ENCODE measurements at regions of chr6 and their contacts with region 1.

Region 1: DNA sequence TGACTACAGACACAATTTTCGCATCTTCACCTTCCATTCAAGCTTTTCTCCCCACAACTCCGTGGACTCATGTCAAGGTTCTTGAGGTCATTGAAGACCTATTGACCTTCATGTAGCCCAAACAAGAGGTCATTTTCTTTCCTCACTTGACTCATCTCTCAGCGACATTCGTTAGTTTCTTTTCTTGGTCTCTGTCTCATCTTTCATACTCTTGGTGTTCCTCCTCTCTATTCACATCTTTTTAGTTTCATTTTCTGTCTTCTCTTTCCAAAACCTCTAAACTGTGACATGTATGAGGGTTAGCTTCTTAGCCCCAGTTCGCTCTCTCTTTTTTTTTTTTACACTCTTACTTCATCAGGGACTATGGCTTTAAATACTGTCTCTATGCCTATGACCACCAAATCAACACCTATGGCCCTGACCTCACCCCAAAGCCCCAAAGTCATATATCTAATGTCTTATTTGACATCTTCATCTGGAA is 128.6 kb upstream of the BACH2 start:
- DNase-seq: peak; percentile 46 to 63
- ATAC-seq: peak; percentile 92 to 96 (median 93)
- H3K4me3 ChIP-seq: no peak overlapping the region
- H3K4me3 Mint-ChIP-seq: peak overlapping the region; percentile 65
- H3K27ac ChIP-seq: peak overlapping the region; percentile 82
- H3K27ac Mint-ChIP-seq: peak overlapping the region; percentile 84 to 88
- H3K4me1 ChIP-seq: no peaks in the 10 kb centered on the region
- H3K4me1 Mint-ChIP-seq: peaks cover 11% of the 10 kb centered on the region in 2 donors
- H3K27me3 ChIP-seq: no peaks in the 10 kb centered on the region
- H3K27me3 Mint-ChIP-seq: no peaks in the 10 kb centered on the region
- CTCF ChIP-seq: no peak

Region 2: DNA sequence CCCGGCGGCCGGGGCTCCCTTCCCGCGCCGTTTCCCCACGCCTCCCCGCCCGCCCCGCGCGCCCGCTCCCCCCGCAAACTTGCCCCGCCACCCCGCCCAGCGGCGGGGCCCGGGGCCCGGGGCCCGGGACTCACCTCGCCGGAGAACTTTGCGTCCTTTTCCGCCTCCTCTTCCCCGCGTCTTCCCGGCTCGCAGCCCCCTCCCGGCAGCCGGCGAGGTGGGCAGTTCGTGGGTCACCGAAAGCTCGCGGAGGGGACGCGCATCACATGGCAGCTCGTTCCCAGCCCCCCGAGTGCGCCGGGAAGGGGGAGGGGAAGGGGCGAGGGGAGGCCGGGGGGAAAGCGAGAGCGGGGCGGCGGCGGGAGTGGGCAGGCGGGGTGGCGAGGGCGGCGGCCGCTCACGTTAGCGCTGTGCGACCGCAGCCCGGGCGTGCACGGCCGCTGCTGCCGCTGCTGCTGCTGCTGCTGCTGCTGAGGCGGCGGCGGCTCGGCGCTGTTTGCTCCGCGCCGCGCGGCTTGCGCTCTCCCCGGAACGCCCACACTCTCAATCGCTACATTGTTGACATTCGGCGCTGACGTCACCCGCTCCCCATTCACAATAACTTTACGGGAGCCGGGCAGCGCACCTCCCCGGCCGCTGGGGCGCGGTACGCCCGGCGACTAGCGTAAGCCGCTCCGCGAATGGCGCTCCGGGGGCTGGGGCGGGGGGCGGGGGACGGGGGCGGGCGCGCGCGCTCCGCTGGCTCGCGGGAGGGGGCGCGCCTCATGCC is 128.7 kb before region 1 on chr6 and contains the start of gene BACH2:
- intact Hi-C with region 1: loop called (anchors 2 kb)
- DNase-seq: peak; percentile 84 to 97
- ATAC-seq: peak; percentile 68 to 81 (median 72)
- H3K4me3 ChIP-seq: peak within 1 kb of the TSS; percentile 67
- H3K4me3 Mint-ChIP-seq: peak within 1 kb of the TSS; percentile 94
- H3K27ac ChIP-seq: peak within 1 kb of the TSS; percentile 79
- H3K27ac Mint-ChIP-seq: peak within 1 kb of the TSS; percentile 83 to 86
- H3K4me1 ChIP-seq: peaks cover 19% of the 10 kb centered on the region
- H3K4me1 Mint-ChIP-seq: peaks cover 11 to 21% of the 10 kb centered on the region in 2 donors
- H3K27me3 ChIP-seq: peaks cover 3% of the 10 kb centered on the region
- H3K27me3 Mint-ChIP-seq: peaks cover 13 to 30% of the 10 kb centered on the region in 2 donors
- CTCF ChIP-seq: no peak
- total RNA-seq, gene BACH2: 32.1 to 37.8 (median 32.7) TPM

Region 3: GRCh38 chr6:90383196-90383822 is 41.9 kb before region 1 on chr6:
- intact Hi-C with region 1: loop called (anchors 1 kb)
- DNase-seq: peak in 1 of 2 donors; percentile 57
- ATAC-seq: peak; percentile 76 to 98 (median 96)
- H3K4me3 ChIP-seq: no peak overlapping the region
- H3K4me3 Mint-ChIP-seq: peak overlapping the region; percentile 69
- H3K27ac ChIP-seq: peak overlapping the region; percentile 52
- H3K27ac Mint-ChIP-seq: peak overlapping the region; percentile 79 to 80
- H3K4me1 ChIP-seq: peaks cover 8% of the 10 kb centered on the region
- H3K4me1 Mint-ChIP-seq: peaks cover 15 to 24% of the 10 kb centered on the region in 2 donors
- H3K27me3 ChIP-seq: no peaks in the 10 kb centered on the region
- H3K27me3 Mint-ChIP-seq: peaks cover 4 to 14% of the 10 kb centered on the region in 2 donors
- CTCF ChIP-seq: no peak

Region 4: DNA sequence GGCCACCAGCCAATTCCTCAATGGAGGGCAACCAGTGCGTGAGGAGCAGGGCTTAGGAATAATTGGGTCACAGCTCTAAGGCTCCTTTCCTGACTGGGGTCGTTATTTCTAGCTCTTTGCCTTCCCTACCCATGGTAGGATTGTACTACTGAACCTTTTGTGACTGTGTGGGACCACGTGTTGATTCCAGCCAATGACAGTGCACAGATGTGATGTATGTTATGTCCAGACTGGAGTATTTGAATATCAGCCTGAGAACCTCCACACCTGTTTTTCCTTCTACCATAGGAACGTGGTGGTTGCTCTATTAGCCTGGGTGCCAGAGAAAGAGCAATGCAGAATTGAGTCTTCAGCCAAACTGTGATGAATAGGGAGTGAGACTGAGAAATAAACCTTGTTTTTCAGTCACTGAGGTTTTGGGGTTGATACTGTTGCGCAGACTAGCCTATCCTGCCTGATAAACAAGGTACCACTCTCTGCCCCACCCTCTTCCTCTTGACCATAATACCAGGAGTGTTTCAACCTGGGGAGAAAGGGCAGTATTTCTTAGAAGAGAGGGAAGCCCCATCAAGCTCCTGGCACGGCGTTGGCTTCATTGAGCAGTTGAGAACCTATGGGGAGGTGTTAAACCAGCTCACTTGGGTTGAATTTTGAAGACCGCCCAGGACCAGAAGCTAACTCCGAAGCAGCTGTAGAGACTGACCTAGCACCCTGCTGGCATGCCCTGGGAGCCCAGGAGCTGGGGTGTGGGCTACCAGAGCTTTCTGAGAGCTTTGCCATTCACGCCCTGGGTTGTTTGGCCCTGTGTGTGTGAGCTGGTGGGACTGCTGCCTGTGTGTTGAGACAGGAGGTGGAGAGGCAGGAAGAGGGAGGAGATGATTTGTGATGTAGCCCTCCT is 23.0 kb before region 1 on chr6:
- intact Hi-C with region 1: loop called (anchors 1 kb)
- DNase-seq: peak; percentile 59 to 70
- ATAC-seq: peak; percentile 48 to 71 (median 50)
- H3K4me3 ChIP-seq: no peak overlapping the region
- H3K4me3 Mint-ChIP-seq: peak overlapping the region; percentile 61
- H3K27ac ChIP-seq: peak overlapping the region; percentile 91
- H3K27ac Mint-ChIP-seq: peak overlapping the region; percentile 91 to 97
- H3K4me1 ChIP-seq: peaks cover 70% of the 10 kb centered on the region
- H3K4me1 Mint-ChIP-seq: peaks cover 67 to 76% of the 10 kb centered on the region in 2 donors
- H3K27me3 ChIP-seq: no peaks in the 10 kb centered on the region
- H3K27me3 Mint-ChIP-seq: no peaks in the 10 kb centered on the region
- CTCF ChIP-seq: no peak

Region 5: GRCh38 chr6:90478789-90479602 is 53.8 kb after region 1 on chr6:
- intact Hi-C with region 1: loop called (anchors 5 kb)
- DNase-seq: peak; percentile 68 to 92
- ATAC-seq: peak; percentile 92 to 97 (median 97)
- H3K4me3 ChIP-seq: no peak overlapping the region
- H3K4me3 Mint-ChIP-seq: no peak overlapping the region
- H3K27ac ChIP-seq: no peak overlapping the region
- H3K27ac Mint-ChIP-seq: peak overlapping the region in 1 of 2 donors; percentile 87
- H3K4me1 ChIP-seq: peaks cover 13% of the 10 kb centered on the region
- H3K4me1 Mint-ChIP-seq: peaks cover 11 to 12% of the 10 kb centered on the region in 2 donors
- H3K27me3 ChIP-seq: no peaks in the 10 kb centered on the region
- H3K27me3 Mint-ChIP-seq: no peaks in the 10 kb centered on the region
- CTCF ChIP-seq: peak; percentile 93

Region 6: DNA sequence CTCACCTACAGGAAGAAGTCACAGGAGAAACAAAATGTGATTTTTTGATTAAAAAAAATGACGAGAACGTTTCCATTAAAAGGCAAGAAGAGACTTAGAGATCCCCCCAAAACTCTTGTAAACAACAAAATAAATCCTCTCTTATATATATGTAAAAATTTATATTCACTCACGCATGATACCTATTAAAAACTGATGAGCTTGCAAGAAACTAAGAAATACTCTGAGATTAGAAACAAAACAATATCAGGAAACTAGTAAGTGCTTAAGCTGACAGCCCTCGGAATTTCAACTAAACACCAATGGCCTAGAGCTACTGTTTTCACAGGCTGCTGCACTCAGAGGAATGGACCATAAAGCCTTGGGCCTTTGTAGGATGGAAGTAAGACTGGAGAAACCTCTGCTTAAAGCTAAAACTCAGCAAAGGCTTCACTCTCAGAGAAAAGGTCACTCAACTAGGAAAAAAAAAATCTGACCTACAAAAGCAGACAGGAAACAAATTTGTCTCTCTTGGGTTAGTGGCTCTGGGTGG is 98.6 kb after region 1 on chr6:
- intact Hi-C with region 1: no loop called
- DNase-seq: no peak
- ATAC-seq: no peak
- H3K4me3 ChIP-seq: no peak overlapping the region
- H3K4me3 Mint-ChIP-seq: no peak overlapping the region
- H3K27ac ChIP-seq: no peak overlapping the region
- H3K27ac Mint-ChIP-seq: peak overlapping the region in 1 of 2 donors; percentile 25
- H3K4me1 ChIP-seq: no peaks in the 10 kb centered on the region
- H3K4me1 Mint-ChIP-seq: no peaks in the 10 kb centered on the region
- H3K27me3 ChIP-seq: no peaks in the 10 kb centered on the region
- H3K27me3 Mint-ChIP-seq: no peaks in the 10 kb centered on the region
- CTCF ChIP-seq: no peak

Region 7: GRCh38 chr6:90537723-90538258 is 112.6 kb after region 1 on chr6:
- intact Hi-C with region 1: no loop called
- DNase-seq: no peak
- ATAC-seq: no peak
- H3K4me3 ChIP-seq: no peak overlapping the region
- H3K4me3 Mint-ChIP-seq: no peak overlapping the region
- H3K27ac ChIP-seq: no peak overlapping the region
- H3K27ac Mint-ChIP-seq: no peak overlapping the region
- H3K4me1 ChIP-seq: peaks cover 3% of the 10 kb centered on the region
- H3K4me1 Mint-ChIP-seq: peaks cover 16 to 31% of the 10 kb centered on the region in 2 donors
- H3K27me3 ChIP-seq: no peaks in the 10 kb centered on the region
- H3K27me3 Mint-ChIP-seq: no peaks in the 10 kb centered on the region
- CTCF ChIP-seq: no peak

Measured in natural killer cell (primary cell).